Activated CD4-positive, alpha-beta memory T cell treated with anti-CD3 and anti-CD28 coated beads for 36 hours (primary cell): ENCODE measurements at regions of chr17 and their contacts with region 1.

Region 1: DNA sequence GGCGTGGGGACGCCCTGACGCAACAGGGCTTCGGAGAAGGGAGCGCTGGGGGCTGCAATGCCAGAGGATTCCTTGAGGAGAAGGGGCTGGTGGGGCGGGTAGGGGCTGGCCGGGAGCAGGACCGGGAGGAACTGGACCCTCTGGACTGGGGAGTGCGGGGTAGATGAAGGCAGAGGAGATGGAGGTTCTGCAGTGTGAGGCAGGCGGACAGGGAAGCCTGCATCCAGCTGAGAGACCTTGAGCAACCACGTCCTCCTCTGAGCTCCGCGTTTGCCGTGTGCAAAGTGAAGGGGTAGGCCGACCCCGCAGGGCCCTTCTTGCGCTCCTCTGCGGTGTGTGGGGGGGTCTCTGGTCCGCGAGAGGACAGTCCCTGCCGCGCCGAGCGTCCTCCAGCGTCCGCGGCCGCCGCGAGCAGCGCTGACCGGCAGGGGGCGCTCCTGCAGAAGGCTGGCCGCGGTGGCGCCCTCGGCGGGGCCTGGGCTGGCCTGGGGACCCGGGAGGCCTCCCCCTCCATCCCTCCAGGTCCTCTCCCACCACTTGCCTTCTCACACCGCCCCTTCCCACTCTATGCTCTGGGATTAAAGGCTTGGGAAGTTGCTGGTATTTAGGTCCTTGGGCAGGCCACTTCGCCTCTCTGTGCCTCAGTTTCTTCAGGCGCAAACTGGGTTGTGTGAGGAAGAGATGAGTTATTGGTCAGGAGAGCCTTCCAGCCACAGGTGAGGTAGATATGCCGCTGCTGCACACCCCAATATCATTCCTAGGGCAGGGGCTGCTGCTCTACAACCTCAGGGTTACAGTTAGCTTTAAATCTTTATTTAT is 9.6 kb upstream of the WNT9B start:
- DNase-seq: no peak
- H3K4me3 Mint-ChIP-seq: no peak overlapping the region
- H3K27ac Mint-ChIP-seq: no peak overlapping the region
- H3K4me1 Mint-ChIP-seq: peaks cover 4% of the 10 kb centered on the region
- H3K27me3 Mint-ChIP-seq: peaks cover 38% of the 10 kb centered on the region

Region 2: GRCh38 chr17:46822388-46822921 is 19.3 kb before region 1 on chr17:
- CTCF ChIA-PET with region 1: no interaction called
- POLR2A ChIA-PET with region 1: no interaction called
- intact Hi-C with region 1: no loop called
- DNase-seq: peak; percentile 56
- H3K4me3 Mint-ChIP-seq: no peak overlapping the region
- H3K27ac Mint-ChIP-seq: no peak overlapping the region
- H3K4me1 Mint-ChIP-seq: peaks cover 11% of the 10 kb centered on the region
- H3K27me3 Mint-ChIP-seq: peaks cover 45% of the 10 kb centered on the region

Region 3: GRCh38 chr17:46853896-46854444 is 12.2 kb after region 1 on chr17:
- CTCF ChIA-PET with region 1: interaction called, 11 read pairs
- POLR2A ChIA-PET with region 1: no interaction called
- intact Hi-C with region 1: no loop called
- DNase-seq: no peak
- H3K4me3 Mint-ChIP-seq: no peak overlapping the region
- H3K27ac Mint-ChIP-seq: no peak overlapping the region
- H3K4me1 Mint-ChIP-seq: peaks cover 3% of the 10 kb centered on the region
- H3K27me3 Mint-ChIP-seq: peaks cover 56% of the 10 kb centered on the region

Region 4: GRCh38 chr17:46910179-46910927 is 68.6 kb after region 1 on chr17:
- CTCF ChIA-PET with region 1: no interaction called
- POLR2A ChIA-PET with region 1: no interaction called
- intact Hi-C with region 1: no loop called
- DNase-seq: no peak
- H3K4me3 Mint-ChIP-seq: no peak overlapping the region
- H3K27ac Mint-ChIP-seq: no peak overlapping the region
- H3K4me1 Mint-ChIP-seq: no peaks in the 10 kb centered on the region
- H3K27me3 Mint-ChIP-seq: peaks cover 9% of the 10 kb centered on the region

Region 5: DNA sequence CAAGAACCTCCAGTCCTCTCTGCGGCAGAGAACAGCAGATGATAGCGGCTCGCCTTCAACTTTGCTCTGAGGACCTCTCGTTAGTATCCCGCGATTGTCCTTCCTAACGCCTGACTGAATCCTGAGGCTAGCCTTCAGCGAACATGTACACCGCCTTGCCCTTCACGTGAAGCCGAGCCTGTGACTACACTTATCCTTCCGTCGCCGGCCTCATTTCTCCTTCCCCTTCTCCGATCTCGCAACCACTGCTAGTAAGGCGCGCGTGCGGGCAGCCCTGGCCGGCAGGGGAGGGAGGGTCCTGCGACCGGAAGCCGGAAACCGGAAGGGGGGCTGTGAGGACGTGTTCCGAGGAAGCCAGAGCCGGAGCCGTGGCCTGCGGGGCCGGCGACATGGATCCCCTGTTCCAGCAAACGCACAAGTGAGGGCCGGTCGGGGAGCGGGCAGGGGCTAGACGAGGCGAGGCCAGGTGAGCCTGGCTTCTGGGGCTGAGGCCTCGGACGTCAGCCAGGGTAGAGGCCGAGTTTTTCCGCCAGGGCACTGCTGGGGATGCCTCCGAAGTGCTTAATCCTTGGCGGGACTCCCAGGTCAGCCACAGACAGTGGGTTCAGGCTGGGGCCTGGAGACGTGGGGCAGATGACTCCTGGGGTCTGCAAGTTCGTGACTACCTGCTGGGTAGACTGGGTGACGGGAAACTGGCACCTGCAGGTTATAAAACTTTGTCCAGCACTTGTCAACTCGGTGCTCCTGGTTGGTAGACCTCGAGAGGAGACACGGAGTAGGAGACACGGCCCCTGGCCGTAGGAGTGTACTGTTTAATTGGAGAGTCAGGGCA is 81.2 kb after region 1 on chr17 and contains the start of gene GOSR2:
- CTCF ChIA-PET with region 1: no interaction called
- POLR2A ChIA-PET with region 1: no interaction called
- intact Hi-C with region 1: no loop called
- DNase-seq: peak; percentile 93
- H3K4me3 Mint-ChIP-seq: peak within 1 kb of the TSS; percentile 81
- H3K27ac Mint-ChIP-seq: peak within 1 kb of the TSS; percentile 99
- H3K4me1 Mint-ChIP-seq: peaks cover 51% of the 10 kb centered on the region
- H3K27me3 Mint-ChIP-seq: no peaks in the 10 kb centered on the region
- total RNA-seq, gene GOSR2: 40.1 to 40.8 TPM